ENCODE measurements at regions of chr3 and their contacts with region 1.

Region 1: GRCh38 chr3:50530001-50530970 is 26.9 kb upstream of the CACNA2D2 start:
- DNase-seq: no peak
- H3K4me3 ChIP-seq: peak overlapping the region in 1 of 4 donors; percentile 12
- H3K27ac ChIP-seq: no peak overlapping the region
- H3K4me1 ChIP-seq: no peaks in the 10 kb centered on the region
- H3K27me3 ChIP-seq: peaks cover 21% of the 10 kb centered on the region
- CTCF ChIP-seq: no peak
- EP300 ChIP-seq: no peak
- POLR2A ChIP-seq: no peak

Region 2: DNA sequence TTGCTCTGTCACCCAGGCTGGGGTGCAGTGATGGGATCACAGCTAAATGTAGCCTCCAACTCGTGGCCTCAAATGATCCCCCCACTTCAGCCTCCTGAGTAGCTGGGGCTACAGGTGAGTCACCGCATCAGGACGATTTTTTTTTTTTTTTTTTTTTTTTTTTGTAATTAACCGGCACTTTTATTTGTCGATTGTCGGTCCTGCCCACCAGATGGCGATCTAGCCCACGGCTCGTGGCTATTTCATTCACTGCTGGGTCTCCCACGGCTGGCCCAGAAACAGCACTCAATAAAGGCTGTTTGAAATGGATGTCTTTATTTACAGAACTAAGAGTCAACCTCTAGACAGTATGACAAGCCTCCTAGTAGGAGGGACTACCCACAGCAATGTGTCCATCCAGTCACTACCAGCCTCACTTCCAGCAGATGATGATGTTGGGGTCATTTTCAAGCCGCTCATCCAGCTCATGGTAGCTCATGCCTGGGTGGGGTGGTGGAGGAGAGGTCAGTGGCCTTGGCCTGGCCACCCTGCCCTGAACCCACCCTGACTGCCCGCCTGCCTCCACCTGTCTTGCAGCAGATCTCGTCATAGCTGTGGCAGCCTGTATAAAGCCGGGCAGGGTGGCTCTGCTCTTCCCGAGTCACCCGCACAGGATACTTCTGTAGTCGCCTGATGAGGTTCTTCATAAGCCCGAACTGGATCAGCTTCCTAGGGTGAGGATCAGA is 182.9 kb before region 1 on chr3:
- in situ Hi-C with region 1: loop called in 1 of 4 experiments (anchors 10 kb)
- intact Hi-C with region 1: no loop called
- DNase-seq: peak; percentile 79
- H3K4me3 ChIP-seq: no peak overlapping the region
- H3K27ac ChIP-seq: peak overlapping the region in 1 of 4 donors; percentile 27
- H3K4me1 ChIP-seq: peaks cover 25 to 43% (median 35%) of the 10 kb centered on the region in 4 donors
- H3K27me3 ChIP-seq: no peaks in the 10 kb centered on the region
- CTCF ChIP-seq: peak; percentile 45 to 60 (median 57)
- EP300 ChIP-seq: no peak
- POLR2A ChIP-seq: no peak

Region 3: DNA sequence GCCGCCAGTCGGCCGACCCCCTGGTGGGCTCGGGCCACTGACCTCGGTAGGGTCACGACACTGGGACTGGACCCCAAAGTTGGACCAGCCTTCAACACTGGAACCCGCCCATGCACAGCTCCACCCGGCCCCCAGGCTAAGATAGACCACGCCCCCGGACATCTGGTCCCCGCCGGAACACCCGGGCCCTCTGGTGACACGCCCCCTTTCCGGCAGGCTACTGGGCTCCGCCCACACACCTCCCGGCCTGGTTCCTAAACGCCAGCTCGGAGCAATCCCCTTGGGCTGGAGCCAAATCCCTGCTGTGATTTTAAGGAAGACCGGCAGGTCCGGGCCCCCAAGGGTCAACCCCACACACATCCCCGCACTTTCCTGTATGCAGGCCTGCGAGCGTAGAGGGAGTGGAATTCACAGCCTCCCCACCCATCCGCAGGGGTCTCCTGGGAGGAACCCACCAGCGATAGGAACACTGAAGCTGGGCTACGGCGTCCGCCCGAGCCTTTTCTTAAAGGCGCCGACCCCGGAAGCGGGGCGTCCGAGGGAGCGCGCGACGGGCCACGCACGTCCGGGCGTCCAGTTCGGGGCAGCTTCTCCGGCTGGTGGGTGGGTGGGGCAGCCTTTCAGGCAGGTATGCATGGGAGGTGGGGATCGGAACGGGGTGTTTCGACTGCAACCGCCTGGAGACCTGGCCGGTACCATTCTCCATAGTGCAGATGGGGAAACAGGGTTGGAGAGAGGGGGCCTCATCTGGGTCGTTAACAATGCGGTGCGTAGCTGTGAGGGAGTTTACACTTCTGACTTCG is 38.9 kb after region 1 on chr3 and contains the start of gene HEMK1:
- in situ Hi-C with region 1: no loop called
- intact Hi-C with region 1: no loop called
- DNase-seq: peak; percentile 99
- H3K4me3 ChIP-seq: peak within 1 kb of the TSS; percentile 59 to 94 (median 73)
- H3K27ac ChIP-seq: peak within 1 kb of the TSS; percentile 89 to 98 (median 92)
- H3K4me1 ChIP-seq: peaks cover 8 to 33% (median 26%) of the 10 kb centered on the region in 4 donors
- H3K27me3 ChIP-seq: no peaks in the 10 kb centered on the region
- CTCF ChIP-seq: peak in 1 of 5 experiments; percentile 10
- EP300 ChIP-seq: no peak
- POLR2A ChIP-seq: peak; percentile 86
- total RNA-seq, gene HEMK1: 7.3 to 11.6 (median 7.9) TPM

Measured in transverse colon (tissue), 4 donors.